Endothelial cell of umbilical vein (primary cell): ENCODE measurements at regions of chr6 and their contacts with region 1.

Region 1: DNA sequence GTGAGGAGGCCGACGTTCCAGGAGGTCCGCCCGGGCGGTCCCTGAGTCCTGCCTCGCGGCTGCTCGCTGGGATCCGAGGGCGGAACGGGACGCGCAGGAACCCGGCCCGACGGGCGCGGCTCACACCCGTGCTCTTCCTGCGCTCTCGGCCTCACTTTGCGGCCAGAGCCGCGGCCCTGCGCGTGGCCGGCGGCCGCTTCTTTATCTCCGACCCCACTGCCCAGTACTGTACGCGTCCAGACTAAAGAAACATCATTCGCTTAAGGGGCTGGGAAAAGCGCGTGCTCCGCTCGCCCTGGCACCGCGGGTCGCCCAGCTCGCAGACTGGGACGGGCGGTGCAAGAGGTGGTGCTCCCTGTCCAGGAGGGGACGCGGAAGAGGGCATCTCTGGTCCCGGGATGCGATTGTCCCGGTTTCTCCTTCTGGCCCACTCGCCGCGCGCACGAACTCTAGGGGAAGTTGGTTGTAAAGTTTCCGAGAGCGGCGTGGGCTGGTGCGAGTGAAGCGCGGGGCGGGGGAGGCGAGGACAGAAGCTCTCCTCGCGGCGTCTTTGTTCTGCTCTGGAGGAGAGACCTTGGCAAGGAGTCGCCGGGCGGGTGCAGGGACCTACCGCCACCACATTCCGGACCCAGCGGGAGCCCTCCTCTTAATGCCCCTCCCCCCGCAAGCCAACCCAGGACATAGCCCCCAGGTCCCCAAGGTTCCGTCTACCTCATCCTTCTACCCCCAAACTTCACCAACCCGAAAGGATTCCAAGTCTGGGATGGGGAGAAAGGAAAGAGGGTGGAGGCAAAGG is 71.0 kb downstream of the SOX4 start:
- DNase-seq: peak; percentile 61
- H3K4me3 ChIP-seq: peak overlapping the region; percentile 47 to 59 (median 55)
- H3K27ac ChIP-seq: peak overlapping the region; percentile 22
- H3K4me1 ChIP-seq: peaks cover 24% of the 10 kb centered on the region
- H3K27me3 ChIP-seq: no peaks in the 10 kb centered on the region
- CTCF ChIP-seq: no peak
- POLR2A ChIP-seq: no peak

Region 2: DNA sequence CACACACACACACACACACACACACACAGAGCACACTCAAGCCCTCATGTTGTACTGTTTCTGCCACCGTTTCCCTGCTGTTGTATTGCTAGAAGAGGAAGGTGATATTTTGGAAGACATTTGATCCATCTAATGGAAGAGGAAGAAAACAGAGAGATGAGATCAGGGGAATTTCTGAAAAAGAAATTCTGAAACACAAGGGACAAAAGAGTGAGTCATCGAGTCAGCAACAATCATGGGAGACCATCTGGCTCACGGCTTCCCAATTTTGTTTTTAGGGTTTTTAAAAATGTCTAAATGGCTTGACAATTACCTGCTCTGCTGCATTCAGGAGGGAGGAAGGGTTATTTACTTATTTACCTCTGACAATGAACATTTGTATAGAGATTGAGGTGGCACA is 49.0 kb before region 1 on chr6:
- CTCF ChIA-PET with region 1: no interaction called
- POLR2A ChIA-PET with region 1: no interaction called
- dilution Hi-C with region 1: no loop called
- intact Hi-C with region 1: loop called (anchors 1 kb)
- DNase-seq: peak; percentile 89
- H3K4me3 ChIP-seq: no peak overlapping the region
- H3K27ac ChIP-seq: peak overlapping the region; percentile 87
- H3K4me1 ChIP-seq: peaks cover 20% of the 10 kb centered on the region
- H3K27me3 ChIP-seq: no peaks in the 10 kb centered on the region
- CTCF ChIP-seq: no peak
- POLR2A ChIP-seq: no peak